Activated CD4-positive, alpha-beta T cell treated with anti-CD3 and anti-CD28 coated beads, Interleukin-2, amount 10 ng/mL, durations not matched to agents 24 days and 14 days (primary cell): ENCODE measurements at regions of chr13 and their contacts with region 1.

Region 1: GRCh38 chr13:29850224-29850898 is at the start of gene UBL3:
- DNase-seq: peak; percentile 97
- H3K4me3 Mint-ChIP-seq: peak within 1 kb of the TSS; percentile 97
- H3K27ac Mint-ChIP-seq: peak within 1 kb of the TSS; percentile 100
- H3K4me1 Mint-ChIP-seq: peaks cover 43% of the 10 kb centered on the region
- H3K27me3 Mint-ChIP-seq: no peaks in the 10 kb centered on the region
- total RNA-seq, gene UBL3: 9.5 and 10.1 TPM in 2 replicates

Region 2: DNA sequence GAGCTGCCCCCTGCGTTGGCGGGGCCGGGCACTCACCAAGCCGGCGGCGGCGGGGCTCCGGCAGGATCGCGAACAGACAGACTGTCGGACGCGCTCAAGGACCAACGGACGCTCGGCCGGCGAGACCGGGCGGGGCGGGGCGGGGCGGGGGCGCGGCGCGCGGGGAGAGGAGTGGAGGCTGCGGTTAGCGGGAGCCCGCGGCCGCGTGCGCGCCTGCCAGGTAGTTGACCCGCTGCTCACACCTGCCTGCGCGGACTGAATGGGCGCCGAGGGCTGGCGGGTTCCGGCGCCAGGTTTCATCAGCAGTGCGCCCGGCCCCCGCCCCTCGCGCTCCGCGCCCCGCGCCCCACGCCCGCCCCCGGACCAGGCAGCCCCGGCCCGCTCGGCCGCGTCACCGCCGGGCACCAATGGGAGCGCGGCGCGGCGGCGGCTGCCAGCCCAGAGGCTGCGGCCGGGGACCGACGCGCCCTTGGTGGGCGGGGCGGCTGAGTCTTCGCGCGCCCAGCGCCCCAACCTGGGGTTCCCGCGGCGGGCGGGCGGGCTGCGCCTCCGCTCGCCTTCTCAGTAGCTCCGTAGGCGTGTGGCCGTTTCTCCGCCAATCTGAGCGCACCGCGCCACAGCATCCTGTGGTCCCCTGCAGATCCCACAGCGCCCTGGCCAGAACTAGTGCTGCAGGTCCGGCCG is 254.8 kb before region 1 on chr13 and contains the start of gene SLC7A1:
- intact Hi-C with region 1: loop called (anchors 2 kb)
- DNase-seq: peak; percentile 97
- H3K4me3 Mint-ChIP-seq: peak within 1 kb of the TSS; percentile 95
- H3K27ac Mint-ChIP-seq: peak within 1 kb of the TSS; percentile 97
- H3K4me1 Mint-ChIP-seq: peaks cover 38% of the 10 kb centered on the region
- H3K27me3 Mint-ChIP-seq: peaks cover 5% of the 10 kb centered on the region
- total RNA-seq, gene SLC7A1: 137 and 138 TPM in 2 replicates

Region 3: DNA sequence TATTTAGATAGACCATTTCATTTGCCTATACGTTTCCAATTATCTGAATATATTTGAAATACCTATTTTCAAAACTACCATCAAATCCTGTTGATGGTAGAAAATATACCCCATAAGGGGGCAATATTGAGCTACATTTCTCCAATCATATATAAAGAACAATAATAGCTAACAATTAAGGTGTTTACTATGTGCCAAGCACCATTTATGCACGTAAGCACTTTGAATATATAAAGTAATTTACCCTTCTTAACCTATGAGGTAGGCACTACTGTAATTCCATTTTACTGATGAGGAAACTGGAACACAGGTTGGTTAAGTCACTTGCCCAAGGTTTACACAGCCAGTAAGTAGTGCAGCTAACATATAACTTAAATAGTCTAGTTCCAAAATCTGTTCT is 79.1 kb before region 1 on chr13:
- intact Hi-C with region 1: loop called (anchors 5 kb)
- DNase-seq: no peak
- H3K4me3 Mint-ChIP-seq: no peak overlapping the region
- H3K27ac Mint-ChIP-seq: no peak overlapping the region
- H3K4me1 Mint-ChIP-seq: peaks cover 2% of the 10 kb centered on the region
- H3K27me3 Mint-ChIP-seq: no peaks in the 10 kb centered on the region

Region 4: GRCh38 chr13:29935309-29935981 is 85.1 kb after region 1 on chr13:
- intact Hi-C with region 1: loop called (anchors 1 kb)
- DNase-seq: peak; percentile 94
- H3K4me3 Mint-ChIP-seq: peak overlapping the region; percentile 87
- H3K27ac Mint-ChIP-seq: peak overlapping the region; percentile 94
- H3K4me1 Mint-ChIP-seq: peaks cover 47% of the 10 kb centered on the region
- H3K27me3 Mint-ChIP-seq: no peaks in the 10 kb centered on the region

Region 5: DNA sequence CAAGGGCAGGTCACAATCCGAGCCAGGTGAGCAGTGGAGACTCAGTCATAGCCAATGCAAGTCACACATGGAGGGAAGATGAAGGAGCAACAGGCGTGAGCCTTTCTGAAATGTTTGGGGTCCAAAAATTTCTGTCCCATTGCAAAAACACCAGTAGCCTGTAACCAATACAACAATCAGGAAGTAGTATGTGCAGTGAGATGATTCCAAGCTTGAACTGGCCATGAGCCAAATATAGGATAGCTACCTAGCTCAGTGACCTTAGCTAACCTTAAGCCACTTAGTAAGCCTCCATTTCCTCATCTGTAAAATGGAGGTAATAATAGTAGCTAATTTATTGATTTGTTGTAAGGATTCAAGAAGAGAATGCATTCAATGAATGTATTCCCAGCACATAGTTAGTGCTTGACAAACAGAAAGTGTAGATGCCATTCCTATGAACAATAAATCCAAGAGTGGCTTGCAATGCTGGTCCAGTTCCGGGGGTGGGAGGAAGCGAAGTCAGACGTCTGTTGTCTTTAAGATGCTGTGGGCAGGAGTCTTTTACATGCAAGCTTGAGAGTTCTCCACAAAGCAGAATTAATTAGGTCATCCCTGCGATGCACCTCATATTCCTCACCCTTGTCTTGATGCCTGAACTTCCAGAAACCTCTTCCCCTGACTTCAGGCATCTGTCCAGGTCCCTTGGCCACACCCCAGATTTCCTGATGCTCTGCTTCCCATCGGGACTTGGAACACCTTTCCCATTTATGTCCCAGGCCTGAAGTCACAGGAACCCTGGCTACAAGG is 195.7 kb after region 1 on chr13:
- intact Hi-C with region 1: loop called (anchors 5 kb)
- DNase-seq: no peak
- H3K4me3 Mint-ChIP-seq: no peak overlapping the region
- H3K27ac Mint-ChIP-seq: no peak overlapping the region
- H3K4me1 Mint-ChIP-seq: peaks cover 19% of the 10 kb centered on the region
- H3K27me3 Mint-ChIP-seq: no peaks in the 10 kb centered on the region

Region 6: GRCh38 chr13:30125422-30126073 is 275.2 kb after region 1 on chr13:
- intact Hi-C with region 1: no loop called
- DNase-seq: no peak
- H3K4me3 Mint-ChIP-seq: no peak overlapping the region
- H3K27ac Mint-ChIP-seq: no peak overlapping the region
- H3K4me1 Mint-ChIP-seq: peaks cover 21% of the 10 kb centered on the region
- H3K27me3 Mint-ChIP-seq: no peaks in the 10 kb centered on the region

Region 7: DNA sequence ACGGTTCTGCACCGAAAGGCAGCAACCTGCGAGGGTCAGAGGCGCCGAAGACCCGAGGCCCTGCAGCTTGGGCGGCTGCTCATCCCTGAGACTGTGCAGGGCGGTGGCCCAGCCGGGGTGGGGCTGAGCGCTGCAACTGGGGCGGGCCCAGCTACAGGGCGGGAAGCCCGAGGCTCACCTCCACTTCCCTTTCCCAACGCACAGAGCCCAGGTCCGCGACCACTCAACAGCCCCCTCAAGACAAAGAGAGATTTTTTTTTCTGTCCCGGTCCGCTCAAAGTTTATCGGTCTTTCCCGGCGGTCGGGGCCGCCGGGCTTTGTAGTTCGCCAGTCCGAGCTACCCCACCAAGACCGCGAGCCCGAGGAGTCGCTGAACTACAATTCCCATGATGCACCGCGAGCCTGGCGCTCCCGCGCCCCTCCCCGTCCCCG is 456.4 kb after region 1 on chr13:
- intact Hi-C with region 1: loop called (anchors 2 kb)
- DNase-seq: peak; percentile 98
- H3K4me3 Mint-ChIP-seq: peak overlapping the region; percentile 89
- H3K27ac Mint-ChIP-seq: peak overlapping the region; percentile 87
- H3K4me1 Mint-ChIP-seq: peaks cover 46% of the 10 kb centered on the region
- H3K27me3 Mint-ChIP-seq: no peaks in the 10 kb centered on the region